ENCODE measurements at regions of chr6 and their contacts with region 1.

Region 1: DNA sequence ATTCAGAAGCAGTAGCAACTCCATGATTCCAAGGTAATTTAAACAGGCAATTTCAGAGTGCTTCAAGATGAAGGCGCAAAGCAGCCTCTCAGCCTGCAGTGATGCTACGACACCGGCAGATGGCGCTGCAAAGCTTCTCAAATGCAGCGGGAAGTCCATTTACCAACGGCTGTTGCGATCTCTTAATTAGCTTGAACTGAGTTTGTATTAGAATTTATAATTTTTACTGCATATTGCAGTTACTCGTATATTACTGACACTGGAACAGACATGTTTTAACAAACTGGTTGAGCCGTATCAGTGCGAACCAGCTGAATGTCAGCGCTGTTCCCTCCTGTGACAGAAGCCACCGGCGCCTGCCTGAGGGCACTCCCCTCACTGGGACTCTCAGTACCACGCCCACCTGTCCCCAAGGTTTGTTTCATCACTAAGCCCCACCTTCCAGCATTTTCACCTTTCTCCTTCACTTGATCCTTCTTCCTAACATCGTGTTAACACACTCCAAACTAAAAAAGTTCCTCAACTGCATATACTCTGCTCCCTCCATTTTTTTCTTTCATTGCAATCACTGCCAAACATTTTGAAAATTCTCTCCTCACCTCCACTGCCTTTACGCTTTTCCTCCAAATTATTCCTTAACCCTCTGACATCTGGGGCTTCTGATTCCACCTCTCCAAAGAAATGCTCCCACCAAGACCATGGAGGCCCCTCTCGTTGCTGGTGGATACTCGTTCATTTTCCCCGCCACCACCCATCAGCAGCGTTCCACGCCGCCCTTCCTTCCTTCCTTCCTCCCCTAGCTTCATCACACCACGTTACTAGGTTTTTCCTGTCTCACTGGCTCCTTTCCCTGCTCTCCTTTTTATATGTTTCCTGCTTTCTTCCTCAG is 14.5 kb downstream of the GNL1 start:
- DNase-seq: peak; percentile 90
- ATAC-seq: peak; percentile 76
- H3K4me3 Mint-ChIP-seq: peak overlapping the region; percentile 59
- H3K27ac Mint-ChIP-seq: peak overlapping the region; percentile 79
- H3K4me1 Mint-ChIP-seq: peaks cover 40% of the 10 kb centered on the region
- H3K27me3 Mint-ChIP-seq: no peaks in the 10 kb centered on the region

Region 2: GRCh38 chr6:30470968-30471367 is 70.8 kb before region 1 on chr6:
- CTCF ChIA-PET with region 1: interaction called, 47 read pairs
- POLR2A ChIA-PET with region 1: no interaction called
- intact Hi-C with region 1: no loop called
- DNase-seq: no peak
- ATAC-seq: no peak
- H3K4me3 Mint-ChIP-seq: no peak overlapping the region
- H3K27ac Mint-ChIP-seq: no peak overlapping the region
- H3K4me1 Mint-ChIP-seq: peaks cover 6% of the 10 kb centered on the region
- H3K27me3 Mint-ChIP-seq: peaks cover 57% of the 10 kb centered on the region

Region 3: GRCh38 chr6:30500421-30501355 is 41.1 kb before region 1 on chr6:
- CTCF ChIA-PET with region 1: interaction called, 152 read pairs
- POLR2A ChIA-PET with region 1: interaction called, 6 read pairs
- intact Hi-C with region 1: loop called in 1 of 2 experiments (anchors 1 kb)
- DNase-seq: peak; percentile 43
- ATAC-seq: peak; percentile 37
- H3K4me3 Mint-ChIP-seq: peak overlapping the region; percentile 65
- H3K27ac Mint-ChIP-seq: peak overlapping the region; percentile 88
- H3K4me1 Mint-ChIP-seq: peaks cover 43% of the 10 kb centered on the region
- H3K27me3 Mint-ChIP-seq: no peaks in the 10 kb centered on the region

Region 4: DNA sequence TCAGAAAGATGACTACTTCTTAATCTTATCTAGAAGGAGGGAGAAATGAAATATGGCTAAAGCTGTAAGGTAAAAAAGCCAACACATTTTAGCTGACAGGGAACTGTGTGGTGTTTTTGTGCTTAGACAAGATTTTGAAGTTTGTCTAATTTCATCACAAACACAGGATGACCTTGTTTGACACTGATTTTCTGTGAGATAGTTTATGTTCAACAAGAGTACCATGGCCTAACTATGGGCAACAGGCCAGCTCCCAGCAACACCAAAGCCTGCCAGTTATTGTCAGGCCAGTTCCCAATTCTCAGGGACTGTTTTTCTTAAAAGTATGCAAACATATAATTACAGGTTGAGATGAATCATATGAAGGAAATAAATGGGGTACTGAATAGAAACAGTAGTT is 24.0 kb after region 1 on chr6:
- CTCF ChIA-PET with region 1: interaction called, 14 read pairs
- POLR2A ChIA-PET with region 1: no interaction called
- intact Hi-C with region 1: no loop called
- DNase-seq: no peak
- ATAC-seq: no peak
- H3K4me3 Mint-ChIP-seq: no peak overlapping the region
- H3K27ac Mint-ChIP-seq: peak overlapping the region; percentile 38
- H3K4me1 Mint-ChIP-seq: peaks cover 38% of the 10 kb centered on the region
- H3K27me3 Mint-ChIP-seq: no peaks in the 10 kb centered on the region

Region 5: GRCh38 chr6:30590994-30591393 is 49.2 kb after region 1 on chr6:
- CTCF ChIA-PET with region 1: interaction called, 71 read pairs
- POLR2A ChIA-PET with region 1: no interaction called
- intact Hi-C with region 1: loop called (anchors 2 kb)
- DNase-seq: no peak
- ATAC-seq: no peak
- H3K4me3 Mint-ChIP-seq: no peak overlapping the region
- H3K27ac Mint-ChIP-seq: peak overlapping the region; percentile 59
- H3K4me1 Mint-ChIP-seq: no peaks in the 10 kb centered on the region
- H3K27me3 Mint-ChIP-seq: no peaks in the 10 kb centered on the region

Measured in activated CD4-positive, alpha-beta T cell treated with anti-CD3 and anti-CD28 coated beads for 36 hours (primary cell).